MCF 10A (cell line): ENCODE measurements at regions of chr10 and their contacts with region 1.

Region 1: GRCh38 chr10:7787857-7788638 is at the starts of genes ATP5F1C and KIN:
- DNase-seq: peak; percentile 97
- H3K4me3 Mint-ChIP-seq: no peak within 1 kb of the TSS
- H3K27ac Mint-ChIP-seq: no peak within 1 kb of the TSS
- H3K4me1 Mint-ChIP-seq: peaks cover 43% of the 10 kb centered on the region
- H3K27me3 Mint-ChIP-seq: no peaks in the 10 kb centered on the region
- CTCF ChIP-seq: no peak
- total RNA-seq, gene ATP5F1C: 268 and 281 TPM in 2 replicates
- total RNA-seq, gene KIN: 13.0 and 15.8 TPM in 2 replicates

Region 2: GRCh38 chr10:7649673-7650300 is 138.3 kb before region 1 on chr10:
- CTCF ChIA-PET with region 1: no interaction called
- POLR2A ChIA-PET with region 1: no interaction called
- intact Hi-C with region 1: no loop called
- DNase-seq: peak; percentile 71
- H3K4me3 Mint-ChIP-seq: no peak overlapping the region
- H3K27ac Mint-ChIP-seq: no peak overlapping the region
- H3K4me1 Mint-ChIP-seq: peaks cover 13% of the 10 kb centered on the region
- H3K27me3 Mint-ChIP-seq: no peaks in the 10 kb centered on the region
- CTCF ChIP-seq: no peak

Region 3: DNA sequence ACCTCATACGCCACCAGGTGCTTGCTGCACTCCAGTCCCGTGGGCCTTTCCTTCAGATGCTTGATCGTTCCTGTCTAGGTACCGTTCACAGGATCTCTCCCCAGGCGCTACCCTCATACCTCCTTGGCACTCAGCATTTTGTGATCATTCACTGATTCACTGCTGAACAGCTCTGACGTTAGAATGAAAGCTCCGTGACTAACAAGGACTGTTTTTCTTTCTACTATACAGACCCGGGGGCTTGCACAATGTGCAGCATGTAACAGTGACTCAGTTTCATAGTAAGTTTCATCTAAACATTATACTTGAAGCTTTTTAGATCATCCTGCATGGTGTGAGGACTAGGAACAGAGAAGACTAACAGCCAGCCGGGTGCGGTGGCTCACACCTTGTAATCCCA is 20.8 kb before region 1 on chr10:
- CTCF ChIA-PET with region 1: no interaction called
- POLR2A ChIA-PET with region 1: interaction called, 38 read pairs
- intact Hi-C with region 1: no loop called
- DNase-seq: peak; percentile 96
- H3K4me3 Mint-ChIP-seq: no peak overlapping the region
- H3K27ac Mint-ChIP-seq: peak overlapping the region; percentile 89
- H3K4me1 Mint-ChIP-seq: peaks cover 6% of the 10 kb centered on the region
- H3K27me3 Mint-ChIP-seq: no peaks in the 10 kb centered on the region
- CTCF ChIP-seq: no peak

Region 4: DNA sequence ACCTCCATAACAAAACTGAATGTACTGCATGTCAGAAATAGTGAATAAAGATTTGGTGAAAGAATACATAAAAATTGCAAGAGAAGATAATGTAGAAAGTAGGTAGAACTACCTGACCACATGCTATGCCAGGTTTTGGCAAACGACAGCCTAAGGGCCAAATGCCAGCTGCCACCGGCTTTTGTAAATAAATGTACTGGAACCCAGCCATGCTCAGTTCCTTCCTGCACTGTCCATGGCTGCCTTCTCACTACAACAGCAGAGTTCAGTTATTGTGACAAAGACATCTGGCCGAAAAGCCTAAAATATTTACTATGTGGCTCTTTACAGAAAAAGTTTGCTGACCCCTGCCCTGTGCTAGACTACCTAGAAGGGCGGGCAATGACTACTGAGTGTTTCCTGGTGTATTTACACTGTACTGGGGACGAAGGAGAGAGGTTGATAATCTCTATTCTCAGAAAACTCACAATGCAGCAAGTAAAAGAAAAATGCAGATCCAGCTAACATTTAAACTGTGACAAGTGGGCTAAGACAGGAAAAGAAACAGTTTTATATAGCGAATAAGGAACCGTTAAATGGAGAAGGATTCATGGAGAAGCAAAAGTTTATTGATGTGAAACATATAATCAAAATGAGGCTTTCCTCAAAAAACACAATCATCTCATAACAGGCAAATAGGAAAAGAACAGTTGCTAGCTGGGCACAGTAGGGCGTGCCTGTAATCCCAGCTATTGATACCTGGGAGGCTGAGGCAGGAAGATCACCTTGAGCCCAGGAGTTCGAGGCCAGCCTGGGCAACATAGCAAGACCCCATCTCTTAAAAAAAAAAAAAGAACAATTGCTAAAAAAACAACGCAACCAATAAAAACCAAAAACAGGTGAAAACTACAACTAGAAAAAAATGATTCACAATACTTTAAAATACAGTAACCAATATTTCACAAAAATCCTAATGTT is 13.9 kb before region 1 on chr10:
- CTCF ChIA-PET with region 1: no interaction called
- POLR2A ChIA-PET with region 1: interaction called, 28 read pairs
- intact Hi-C with region 1: no loop called
- DNase-seq: peak; percentile 52
- H3K4me3 Mint-ChIP-seq: no peak overlapping the region
- H3K27ac Mint-ChIP-seq: no peak overlapping the region
- H3K4me1 Mint-ChIP-seq: peaks cover 8% of the 10 kb centered on the region
- H3K27me3 Mint-ChIP-seq: no peaks in the 10 kb centered on the region
- CTCF ChIP-seq: no peak

Region 5: DNA sequence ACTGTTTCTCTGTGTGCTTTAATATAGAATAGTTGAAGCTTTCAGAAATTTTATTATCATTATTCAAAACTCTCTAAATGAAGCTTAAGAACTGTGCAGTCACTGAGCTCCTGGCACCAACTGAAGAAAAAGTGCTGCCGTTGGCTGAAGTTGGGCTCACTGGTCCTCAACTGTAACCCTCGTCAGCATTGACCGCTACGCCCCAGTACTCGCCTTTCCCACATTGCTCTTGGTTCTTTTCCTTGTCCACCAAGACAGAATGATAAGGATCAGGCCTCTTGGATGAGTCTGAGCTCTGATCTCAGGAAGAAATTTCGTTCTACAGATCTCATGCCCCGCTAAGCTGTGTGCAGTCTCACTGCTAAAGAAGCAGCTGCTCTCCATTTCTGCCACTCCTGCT is 22.4 kb after region 1 on chr10:
- CTCF ChIA-PET with region 1: interaction called, 4 read pairs
- POLR2A ChIA-PET with region 1: interaction called, 49 read pairs
- intact Hi-C with region 1: no loop called
- DNase-seq: no peak
- H3K4me3 Mint-ChIP-seq: no peak overlapping the region
- H3K27ac Mint-ChIP-seq: no peak overlapping the region
- H3K4me1 Mint-ChIP-seq: no peaks in the 10 kb centered on the region
- H3K27me3 Mint-ChIP-seq: no peaks in the 10 kb centered on the region
- CTCF ChIP-seq: no peak

Region 6: DNA sequence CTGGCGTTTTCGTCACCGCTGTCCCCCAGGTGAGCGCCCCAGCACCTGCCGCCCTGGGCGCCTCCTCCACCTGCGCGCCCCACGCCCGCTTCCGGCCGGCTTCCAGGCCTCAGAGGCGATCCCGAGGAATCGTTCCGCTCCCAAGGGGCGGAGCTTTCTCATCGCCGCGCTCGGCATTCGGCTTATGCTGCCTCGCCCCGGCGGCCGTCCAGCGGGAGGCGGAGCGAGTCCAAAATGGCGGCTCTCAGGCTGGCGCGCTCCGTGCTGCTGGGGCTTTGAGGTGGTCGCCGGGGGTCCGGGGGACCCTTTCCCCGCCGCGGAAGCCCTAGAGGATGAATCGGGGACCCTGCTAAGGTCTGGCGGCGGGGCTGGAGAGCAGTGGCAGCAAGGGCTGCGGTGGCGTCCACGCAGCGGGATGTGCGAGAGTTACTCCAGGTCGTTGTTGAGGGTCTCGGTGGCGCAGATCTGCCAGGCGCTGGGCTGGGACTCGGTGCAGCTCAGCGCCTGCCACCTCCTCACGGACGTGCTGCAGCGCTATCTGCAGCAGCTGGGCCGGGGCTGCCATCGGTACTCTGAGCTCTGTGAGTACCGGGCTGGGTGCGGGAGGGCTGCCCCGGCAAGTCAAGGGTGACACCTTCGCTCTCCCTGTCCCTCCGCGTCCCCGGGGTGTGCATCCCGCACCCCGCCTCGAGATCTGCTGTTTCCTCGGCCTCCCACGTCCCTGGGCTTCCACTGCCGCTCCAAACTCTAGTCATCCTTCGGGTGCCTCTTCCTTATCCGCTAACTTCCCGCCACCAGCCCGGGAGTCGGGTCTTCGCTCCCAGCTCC is 30.5 kb after region 1 on chr10 and contains the start of gene TAF3:
- CTCF ChIA-PET with region 1: interaction called, 4 read pairs
- POLR2A ChIA-PET with region 1: interaction called, 129 read pairs
- intact Hi-C with region 1: loop called (anchors 1 kb)
- DNase-seq: peak; percentile 92
- H3K4me3 Mint-ChIP-seq: peak within 1 kb of the TSS; percentile 94
- H3K27ac Mint-ChIP-seq: peak within 1 kb of the TSS; percentile 57
- H3K4me1 Mint-ChIP-seq: peaks cover 24% of the 10 kb centered on the region
- H3K27me3 Mint-ChIP-seq: no peaks in the 10 kb centered on the region
- CTCF ChIP-seq: no peak
- total RNA-seq, gene TAF3: 9.3 and 9.9 TPM in 2 replicates

Region 7: DNA sequence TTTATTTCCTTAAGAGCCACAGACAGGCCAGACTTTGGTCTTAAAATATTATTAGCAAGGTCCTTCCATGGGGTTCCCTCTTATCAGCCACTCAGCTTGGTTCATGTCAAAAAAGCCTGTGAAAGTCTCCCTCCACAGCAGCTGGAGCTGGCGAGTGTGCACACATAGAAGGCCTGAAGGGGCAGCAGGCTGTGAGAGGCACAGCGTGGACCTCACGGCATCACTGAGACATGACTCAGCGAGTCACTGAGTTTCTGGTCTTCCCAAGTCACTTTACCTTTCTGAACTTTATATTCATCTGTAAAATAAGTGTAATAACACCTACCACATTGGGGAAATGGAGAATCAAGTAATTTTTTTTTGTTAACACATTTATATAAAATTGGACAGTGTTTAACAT is 38.9 kb after region 1 on chr10:
- CTCF ChIA-PET with region 1: no interaction called
- POLR2A ChIA-PET with region 1: interaction called, 129 read pairs
- intact Hi-C with region 1: no loop called
- DNase-seq: peak; percentile 35
- H3K4me3 Mint-ChIP-seq: no peak overlapping the region
- H3K27ac Mint-ChIP-seq: peak overlapping the region; percentile 42
- H3K4me1 Mint-ChIP-seq: peaks cover 2% of the 10 kb centered on the region
- H3K27me3 Mint-ChIP-seq: no peaks in the 10 kb centered on the region
- CTCF ChIP-seq: no peak

Region 8: DNA sequence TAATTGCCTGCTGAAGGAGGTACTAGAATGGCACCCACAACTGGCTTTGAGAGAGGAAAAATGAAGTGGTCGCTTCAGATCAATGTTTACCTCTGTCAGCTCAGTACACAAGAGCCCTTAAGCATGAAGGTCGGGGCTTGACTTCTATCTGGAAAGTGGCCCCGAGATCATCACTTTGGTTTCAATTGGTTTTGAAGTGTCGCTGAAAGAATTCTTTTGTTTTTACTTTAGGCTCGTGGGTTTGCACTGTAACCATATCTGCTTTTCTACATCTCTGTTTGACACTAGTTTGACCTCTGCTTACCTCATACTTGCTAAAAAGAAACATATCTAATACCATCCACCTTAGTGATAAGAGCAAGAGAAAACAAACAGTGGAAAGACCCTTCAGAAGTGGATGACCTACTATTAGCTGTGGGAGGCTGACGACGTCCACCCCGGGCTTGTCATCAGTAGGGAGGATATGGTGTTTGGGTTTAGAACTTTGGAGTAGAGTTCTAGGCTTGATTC is 628.2 kb after region 1 on chr10:
- CTCF ChIA-PET with region 1: no interaction called
- POLR2A ChIA-PET with region 1: no interaction called
- intact Hi-C with region 1: no loop called
- DNase-seq: no peak
- H3K4me3 Mint-ChIP-seq: no peak overlapping the region
- H3K27ac Mint-ChIP-seq: no peak overlapping the region
- H3K4me1 Mint-ChIP-seq: no peaks in the 10 kb centered on the region
- H3K27me3 Mint-ChIP-seq: no peaks in the 10 kb centered on the region
- CTCF ChIP-seq: no peak